ENCODE measurements at regions of chr15 and their contacts with region 1.

Region 1: GRCh38 chr15:68650901-68651709 is 72.3 kb downstream of the CORO2B start:
- DNase-seq: no peak
- H3K4me3 ChIP-seq: no peak overlapping the region
- H3K27me3 ChIP-seq: no peaks in the 10 kb centered on the region
- CTCF ChIP-seq: peak; percentile 63

Region 2: DNA sequence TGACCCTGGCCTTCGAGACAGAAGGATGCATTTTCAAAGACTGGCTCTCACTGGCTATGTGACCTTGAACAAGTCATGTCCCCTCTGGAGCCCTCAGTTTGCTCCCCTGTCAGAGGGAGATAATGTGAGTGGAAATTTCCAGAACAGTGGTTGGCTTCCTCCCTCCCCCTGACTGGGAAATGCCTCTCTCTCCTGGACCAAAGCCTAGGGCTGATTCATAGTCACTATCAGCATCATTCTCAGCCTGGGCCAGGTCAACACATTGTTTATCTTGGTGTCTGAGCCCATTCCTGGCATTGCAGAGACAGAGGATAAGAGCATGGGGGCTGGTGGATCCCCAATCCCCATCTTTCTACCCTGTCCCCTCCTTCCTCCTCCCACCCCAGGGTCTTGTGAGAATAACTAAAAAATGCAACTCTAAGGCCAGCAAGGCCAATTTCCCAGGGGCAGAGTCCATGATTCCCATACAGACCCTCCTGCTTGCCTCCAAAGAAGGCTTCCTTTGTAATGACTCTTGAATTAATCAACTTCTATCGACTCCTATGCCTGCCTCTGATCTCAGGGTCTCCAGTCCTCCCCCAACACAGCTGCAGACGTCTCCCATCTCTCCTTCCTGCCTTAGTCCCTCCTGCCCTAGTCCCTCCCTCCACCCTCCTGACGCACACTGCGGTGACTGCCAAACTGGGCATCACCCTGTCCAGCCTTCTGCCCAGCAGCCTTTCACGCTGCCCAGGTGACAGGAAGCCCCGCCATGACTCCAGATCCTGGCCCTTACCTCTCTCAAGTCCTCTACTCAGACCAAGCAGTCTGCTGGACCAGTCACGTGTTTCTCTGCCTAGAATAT is 107.7 kb before region 1 on chr15:
- CTCF ChIA-PET with region 1: no interaction called
- POLR2A ChIA-PET with region 1: no interaction called
- DNase-seq: peak; percentile 63
- H3K4me3 ChIP-seq: no peak overlapping the region
- H3K27me3 ChIP-seq: no peaks in the 10 kb centered on the region
- CTCF ChIP-seq: no peak

Region 3: DNA sequence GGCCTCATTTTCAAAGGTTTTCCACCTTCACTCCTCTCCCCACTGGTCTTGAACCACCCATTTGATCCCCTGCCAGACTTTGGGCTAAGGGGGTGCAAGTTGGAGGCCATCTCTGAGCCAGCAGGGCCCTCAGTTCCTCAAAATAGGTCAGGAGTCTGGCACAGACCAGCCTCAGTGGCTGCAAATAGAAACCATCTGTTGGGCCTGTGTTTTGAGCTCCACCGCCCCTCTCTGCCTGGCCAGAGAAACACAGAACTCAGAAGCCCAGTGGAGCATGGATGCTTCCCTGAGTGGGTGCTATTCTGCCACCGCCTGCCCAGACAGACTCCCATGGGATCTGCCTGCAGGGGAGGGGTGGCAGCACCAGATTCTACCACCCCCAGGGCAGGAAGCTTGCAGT is 16.0 kb before region 1 on chr15:
- CTCF ChIA-PET with region 1: interaction called, 4 read pairs
- POLR2A ChIA-PET with region 1: interaction called, 21 read pairs
- DNase-seq: no peak
- H3K4me3 ChIP-seq: no peak overlapping the region
- H3K27me3 ChIP-seq: no peaks in the 10 kb centered on the region
- CTCF ChIP-seq: 0 out of 2 replicates have a peak, but pooled peaks have one; percentile 10